Natural killer cell (primary cell): ENCODE measurements at regions of chr2 and their contacts with region 1.

Region 1: DNA sequence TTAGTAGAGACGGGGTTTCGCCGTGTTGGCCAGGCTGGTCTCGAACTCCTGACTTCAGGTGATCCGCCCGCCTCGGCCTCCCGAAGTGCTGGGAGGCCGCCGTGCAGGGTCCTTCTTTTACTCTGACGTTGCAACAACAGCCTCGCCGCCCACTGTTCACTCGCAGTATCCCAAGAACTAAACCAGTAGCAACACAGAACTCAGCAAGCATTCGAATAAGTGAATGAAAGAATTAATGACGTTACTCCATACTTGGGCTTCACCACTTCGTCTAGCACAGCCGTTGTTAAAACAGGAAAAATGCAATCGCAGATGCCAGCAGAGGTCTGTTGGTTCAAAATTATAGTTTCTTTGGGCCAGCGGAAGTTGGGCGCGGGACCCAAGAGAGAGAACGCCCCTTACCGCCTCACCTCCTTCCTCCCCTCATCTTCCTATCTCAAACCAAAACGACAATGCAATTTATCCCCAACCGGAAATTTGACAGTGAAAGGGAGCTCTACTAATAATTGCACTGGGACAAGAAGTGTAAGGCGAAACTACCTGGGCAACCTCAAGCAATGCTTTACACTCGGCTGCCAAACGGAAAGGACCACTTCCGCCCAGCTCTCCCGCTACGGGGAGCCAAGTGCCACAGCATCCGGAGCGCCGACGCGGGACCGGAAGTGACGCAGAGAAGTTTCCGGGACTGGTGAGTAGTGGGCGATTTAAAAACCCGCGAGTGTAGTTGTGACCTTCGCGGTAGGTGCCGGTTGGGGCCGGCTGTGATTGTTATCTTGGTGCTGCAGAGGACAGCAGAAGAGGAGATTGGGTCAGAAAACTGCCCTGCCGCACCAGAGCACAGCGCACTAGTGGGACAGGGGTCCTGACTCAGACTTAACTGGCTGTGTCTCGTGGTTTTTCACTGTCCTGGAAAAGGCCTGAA is at the starts of genes NIF3L1 and PPIL3:
- DNase-seq: peak; percentile 95 to 99
- ATAC-seq: peak; percentile 76 to 91 (median 84)
- H3K4me3 ChIP-seq: peak within 1 kb of the TSS; percentile 72
- H3K4me3 Mint-ChIP-seq: peak within 1 kb of the TSS; percentile 99
- H3K27ac ChIP-seq: peak within 1 kb of the TSS; percentile 91
- H3K27ac Mint-ChIP-seq: peak within 1 kb of the TSS; percentile 99 to 100
- H3K4me1 ChIP-seq: peaks cover 28% of the 10 kb centered on the region
- H3K4me1 Mint-ChIP-seq: peaks cover 39 to 49% of the 10 kb centered on the region in 2 donors
- H3K27me3 ChIP-seq: no peaks in the 10 kb centered on the region
- H3K27me3 Mint-ChIP-seq: no peaks in the 10 kb centered on the region
- CTCF ChIP-seq: no peak
- total RNA-seq, gene NIF3L1: 8.8 to 13.3 (median 9.6) TPM
- total RNA-seq, gene PPIL3: 30.0 to 39.9 (median 33.3) TPM

Region 2: DNA sequence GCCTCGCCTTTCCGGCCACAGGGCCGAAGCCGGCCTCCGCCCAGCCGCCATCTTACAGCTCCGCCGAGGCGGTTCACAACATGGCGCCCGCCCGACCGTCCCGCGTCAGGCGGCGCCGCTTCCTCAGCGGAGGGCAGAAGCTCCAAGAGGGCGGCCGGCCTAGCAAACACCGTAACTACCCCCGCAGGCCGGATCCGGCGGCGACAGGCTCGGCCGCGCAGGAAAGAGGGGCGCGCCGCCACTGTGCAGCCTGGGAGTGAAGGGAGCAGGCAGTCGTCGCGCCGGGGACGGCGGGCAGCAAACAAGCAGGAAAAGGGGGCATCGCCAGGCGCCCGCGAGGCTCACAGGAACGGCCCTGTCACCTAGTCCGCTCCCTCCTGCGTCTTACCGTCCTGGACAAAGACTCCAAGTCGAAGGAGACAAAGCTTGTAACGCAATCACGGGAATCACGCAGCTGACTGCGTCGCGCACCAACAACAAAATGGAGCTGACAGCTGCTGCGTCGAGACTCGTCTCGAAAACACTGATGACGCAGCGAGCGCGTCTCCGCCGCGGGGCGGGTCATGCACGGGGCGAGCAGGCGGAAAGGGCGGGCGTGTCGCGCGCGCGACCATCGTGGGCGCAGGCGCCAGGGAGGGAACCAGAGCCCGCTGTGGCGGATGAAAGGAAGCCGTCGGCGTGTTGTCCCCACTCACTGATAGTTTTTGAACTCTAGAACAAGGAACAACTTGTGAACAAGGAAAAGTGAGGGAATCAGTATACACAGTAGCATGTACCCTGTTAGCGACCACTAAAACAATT is 24.6 kb before region 1 on chr2 and contains the start of gene CLK1:
- intact Hi-C with region 1: loop called (anchors 1 kb)
- DNase-seq: peak; percentile 93 to 98
- ATAC-seq: peak; percentile 76 to 92 (median 82)
- H3K4me3 ChIP-seq: peak within 1 kb of the TSS; percentile 95
- H3K4me3 Mint-ChIP-seq: peak within 1 kb of the TSS; percentile 93
- H3K27ac ChIP-seq: peak within 1 kb of the TSS; percentile 99
- H3K27ac Mint-ChIP-seq: peak within 1 kb of the TSS; percentile 92 to 99
- H3K4me1 ChIP-seq: peaks cover 23% of the 10 kb centered on the region
- H3K4me1 Mint-ChIP-seq: peaks cover 45 to 58% of the 10 kb centered on the region in 2 donors
- H3K27me3 ChIP-seq: no peaks in the 10 kb centered on the region
- H3K27me3 Mint-ChIP-seq: no peaks in the 10 kb centered on the region
- CTCF ChIP-seq: no peak
- total RNA-seq, gene CLK1: 975 to 1,296 (median 1,070) TPM

Region 3: DNA sequence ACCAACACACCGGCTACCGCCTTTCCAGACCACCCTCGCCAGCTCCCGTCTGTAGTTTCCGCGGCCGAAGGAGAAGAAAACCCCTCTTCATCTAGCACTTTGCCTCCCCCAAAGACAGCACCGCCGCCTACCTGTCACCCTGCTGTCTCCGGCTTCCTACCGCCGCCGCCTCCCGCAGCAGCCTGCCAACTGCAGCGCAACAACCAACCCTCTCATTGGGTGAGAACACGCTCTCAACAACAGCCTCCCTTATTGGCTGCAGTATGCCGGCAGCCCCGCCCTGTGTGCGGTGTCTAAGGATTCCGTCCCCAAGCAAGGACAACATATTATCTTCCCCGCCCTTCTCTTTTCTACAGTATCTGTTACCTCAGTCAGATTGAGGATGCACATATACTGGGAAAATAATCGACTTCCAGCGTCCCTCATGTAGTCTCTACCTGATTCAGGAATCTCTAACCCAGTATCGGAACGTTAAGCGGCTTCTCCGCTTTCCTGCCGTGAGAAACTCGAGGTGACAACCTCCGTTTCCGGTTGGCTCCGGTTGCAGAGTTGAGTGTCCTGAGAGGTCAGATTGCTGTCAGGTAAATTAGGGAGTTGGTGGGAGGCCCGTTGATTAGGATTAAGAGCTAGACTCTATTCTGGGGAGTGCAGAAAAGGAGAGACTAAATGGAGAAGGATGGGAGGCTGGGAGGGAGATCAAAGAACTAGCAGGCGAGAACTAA is 182.7 kb after region 1 on chr2 and contains the starts of genes HYCC2 and NDUFB3:
- intact Hi-C with region 1: loop called (anchors 5 kb)
- DNase-seq: peak; percentile 90 to 98
- ATAC-seq: peak; percentile 92 to 99 (median 96)
- H3K4me3 ChIP-seq: peak within 1 kb of the TSS; percentile 72
- H3K4me3 Mint-ChIP-seq: peak within 1 kb of the TSS; percentile 97
- H3K27ac ChIP-seq: peak within 1 kb of the TSS; percentile 90
- H3K27ac Mint-ChIP-seq: peak within 1 kb of the TSS; percentile 93 to 100
- H3K4me1 ChIP-seq: peaks cover 12% of the 10 kb centered on the region
- H3K4me1 Mint-ChIP-seq: peaks cover 43 to 46% of the 10 kb centered on the region in 2 donors
- H3K27me3 ChIP-seq: no peaks in the 10 kb centered on the region
- H3K27me3 Mint-ChIP-seq: no peaks in the 10 kb centered on the region
- CTCF ChIP-seq: peak; percentile 30
- total RNA-seq, gene HYCC2: 54.2 to 62.5 (median 60.1) TPM
- total RNA-seq, gene NDUFB3: 23.5 to 32.7 (median 30.7) TPM

Region 4: GRCh38 chr2:201182650-201183364 is 293.8 kb after region 1 on chr2 and contains the start of gene CASP10:
- intact Hi-C with region 1: loop called (anchors 5 kb)
- DNase-seq: peak in 1 of 2 donors; percentile 87
- ATAC-seq: peak; percentile 75 to 83 (median 79)
- H3K4me3 ChIP-seq: peak within 1 kb of the TSS; percentile 59
- H3K4me3 Mint-ChIP-seq: peak within 1 kb of the TSS; percentile 97
- H3K27ac ChIP-seq: peak within 1 kb of the TSS; percentile 72
- H3K27ac Mint-ChIP-seq: peak within 1 kb of the TSS; percentile 97 to 98
- H3K4me1 ChIP-seq: peaks cover 28% of the 10 kb centered on the region
- H3K4me1 Mint-ChIP-seq: peaks cover 51 to 52% of the 10 kb centered on the region in 2 donors
- H3K27me3 ChIP-seq: no peaks in the 10 kb centered on the region
- H3K27me3 Mint-ChIP-seq: no peaks in the 10 kb centered on the region
- CTCF ChIP-seq: peak; percentile 57
- total RNA-seq, gene CASP10: 67.4 to 101 (median 75.3) TPM

Region 5: GRCh38 chr2:201451292-201452057 is 562.5 kb after region 1 on chr2 and contains the starts of genes STRADB and TRAK2:
- intact Hi-C with region 1: loop called (anchors 5 kb)
- DNase-seq: peak; percentile 92 to 97
- ATAC-seq: peak; percentile 93 to 98 (median 93)
- H3K4me3 ChIP-seq: peak within 1 kb of the TSS; percentile 65
- H3K4me3 Mint-ChIP-seq: peak within 1 kb of the TSS; percentile 98
- H3K27ac ChIP-seq: peak within 1 kb of the TSS; percentile 72
- H3K27ac Mint-ChIP-seq: peak within 1 kb of the TSS; percentile 95 to 99
- H3K4me1 ChIP-seq: peaks cover 10% of the 10 kb centered on the region
- H3K4me1 Mint-ChIP-seq: peaks cover 29 to 38% of the 10 kb centered on the region in 2 donors
- H3K27me3 ChIP-seq: no peaks in the 10 kb centered on the region
- H3K27me3 Mint-ChIP-seq: no peaks in the 10 kb centered on the region
- CTCF ChIP-seq: peak; percentile 18
- total RNA-seq, gene STRADB: 11.8 to 15.3 (median 14.7) TPM
- total RNA-seq, gene TRAK2: 19.2 to 29.4 (median 26.2) TPM

Region 6: GRCh38 chr2:202033321-202034248 is 1144.6 kb after region 1 on chr2 and contains the start of gene FZD7:
- intact Hi-C with region 1: no loop called
- DNase-seq: peak; percentile 78 to 89
- ATAC-seq: peak; percentile 83 to 91 (median 86)
- H3K4me3 ChIP-seq: peak within 1 kb of the TSS; percentile 94
- H3K4me3 Mint-ChIP-seq: peak within 1 kb of the TSS; percentile 92
- H3K27ac ChIP-seq: peak within 1 kb of the TSS; percentile 38
- H3K27ac Mint-ChIP-seq: peak within 1 kb of the TSS in 1 of 2 donors; percentile 41
- H3K4me1 ChIP-seq: peaks cover 27% of the 10 kb centered on the region
- H3K4me1 Mint-ChIP-seq: peaks cover 14 to 15% of the 10 kb centered on the region in 2 donors
- H3K27me3 ChIP-seq: peaks cover 28% of the 10 kb centered on the region
- H3K27me3 Mint-ChIP-seq: peaks cover 15 to 29% of the 10 kb centered on the region in 2 donors
- CTCF ChIP-seq: no peak
- total RNA-seq, gene FZD7: 0.27 to 1.6 TPM in 2 of 3 donors, not detected in the other